ENCODE measurements at regions of chr15 and their contacts with region 1.

Region 1: GRCh38 chr15:72237286-72238224 is 6.6 kb upstream of the PKM start:
- DNase-seq: peak in 1 of 2 experiments; percentile 43
- H3K4me3 ChIP-seq: peak overlapping the region in 1 of 4 experiments; percentile 12; a peak in 1 of 8 replicates
- H3K27ac ChIP-seq: no peak overlapping the region
- H3K4me1 ChIP-seq: peaks cover 0 to 10% (median 4%) of the 10 kb centered on the region in 4 experiments; a peak in 4 of 7 replicates
- H3K27me3 ChIP-seq: peaks cover 21 to 85% (median 55%) of the 10 kb centered on the region in 4 experiments
- CTCF ChIP-seq: no peak
- EP300 ChIP-seq: no peak
- POLR2A ChIP-seq: no peak
- RAD21 ChIP-seq: no peak

Region 2: GRCh38 chr15:72249142-72249810 is 11.7 kb after region 1 on chr15:
- CTCF ChIA-PET with region 1: no interaction called
- POLR2A ChIA-PET with region 1: interaction called, 66 read pairs
- DNase-seq: no peak
- H3K4me3 ChIP-seq: no peak overlapping the region
- H3K27ac ChIP-seq: no peak overlapping the region
- H3K4me1 ChIP-seq: no peaks in the 10 kb centered on the region
- H3K27me3 ChIP-seq: peaks cover under 1 to 15% (median 6%) of the 10 kb centered on the region in 4 experiments
- CTCF ChIP-seq: no peak
- EP300 ChIP-seq: no peak
- POLR2A ChIP-seq: no peak
- RAD21 ChIP-seq: no peak

Measured in H1 (cell line).